ENCODE measurements at regions of chr1 and their contacts with region 1.

Region 1: GRCh38 chr1:18581420-18581880 is 49.2 kb upstream of the PAX7 start:
- DNase-seq: peak in 1 of 2 experiments; percentile 93
- H3K4me3 ChIP-seq: no peak overlapping the region
- H3K27ac ChIP-seq: no peak overlapping the region
- H3K4me1 ChIP-seq: no peaks in the 10 kb centered on the region; a peak in 1 of 7 replicates
- H3K27me3 ChIP-seq: peaks cover 0 to 2% (median 0%) of the 10 kb centered on the region in 4 experiments; a peak in 3 of 7 replicates
- CTCF ChIP-seq: peak; percentile 94 to 100 (median 96)
- EP300 ChIP-seq: no peak
- POLR2A ChIP-seq: no peak
- RAD21 ChIP-seq: peak; percentile 98 to 99

Region 2: DNA sequence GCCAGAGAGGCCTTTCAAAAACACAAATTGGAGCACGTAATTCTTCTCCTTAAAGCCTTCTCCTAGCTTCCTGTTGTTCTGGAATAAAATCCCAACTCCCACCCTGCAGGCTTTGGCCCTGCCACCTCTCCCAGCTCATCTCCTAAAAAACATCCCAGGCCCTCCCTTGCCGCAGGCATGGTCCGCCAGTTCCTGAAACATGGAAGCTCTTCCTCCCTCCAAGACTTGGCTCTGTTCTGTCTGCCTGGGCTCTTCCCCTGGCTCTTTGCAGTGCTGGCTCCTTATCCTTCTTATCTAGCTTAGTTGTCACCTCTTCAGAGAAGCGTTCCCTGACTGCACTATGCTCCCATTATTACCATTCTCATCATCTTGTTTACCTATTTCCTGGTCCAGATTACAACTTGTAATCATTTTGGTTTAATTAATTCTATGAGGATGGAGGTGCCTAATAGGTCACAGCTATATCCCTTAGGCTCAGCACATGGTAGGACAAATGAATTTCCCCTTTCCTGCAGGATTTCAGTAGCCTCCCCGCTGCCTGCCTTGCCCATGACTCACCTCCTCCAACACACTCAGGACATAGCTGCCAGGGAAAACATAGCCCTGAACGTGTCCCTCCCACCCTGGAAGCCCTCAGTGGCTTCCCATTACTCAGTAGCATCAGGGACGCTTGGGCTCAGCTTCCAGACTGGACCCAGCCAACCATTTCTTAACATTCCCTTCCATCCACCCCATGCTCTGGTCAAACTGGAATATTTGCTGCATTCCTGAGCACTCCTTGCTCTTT is 489.6 kb before region 1 on chr1:
- CTCF ChIA-PET with region 1: interaction called, 13 read pairs
- POLR2A ChIA-PET with region 1: no interaction called
- DNase-seq: no peak
- H3K4me3 ChIP-seq: peak overlapping the region in 1 of 4 experiments; percentile 5; a peak in 2 of 8 replicates
- H3K27ac ChIP-seq: no peak overlapping the region
- H3K4me1 ChIP-seq: peaks cover 6 to 23% (median 15%) of the 10 kb centered on the region in 4 experiments
- H3K27me3 ChIP-seq: peaks cover 0 to 5% (median 0%) of the 10 kb centered on the region in 4 experiments; a peak in 1 of 7 replicates
- CTCF ChIP-seq: no peak
- EP300 ChIP-seq: no peak
- POLR2A ChIP-seq: no peak
- RAD21 ChIP-seq: no peak

Region 3: DNA sequence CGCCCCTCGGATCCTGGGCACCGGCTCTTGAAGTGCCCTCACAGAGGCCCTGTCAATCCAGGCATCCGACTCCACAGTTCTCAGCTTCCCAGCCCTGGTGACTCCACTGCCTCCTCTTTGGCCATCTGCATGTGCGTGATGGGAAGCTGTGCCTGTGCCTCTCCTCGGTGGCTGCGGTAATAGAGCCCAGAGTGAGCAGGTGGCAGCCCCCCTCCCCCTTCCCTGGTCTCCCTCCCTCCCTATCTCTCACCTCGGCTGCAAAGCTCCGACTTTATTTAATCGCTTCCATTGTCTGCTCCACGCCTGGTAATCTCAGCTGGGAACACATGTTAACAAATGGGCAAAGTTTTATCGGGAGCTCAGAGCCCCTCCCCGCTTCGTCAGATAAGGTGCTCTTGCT is 382.0 kb before region 1 on chr1:
- CTCF ChIA-PET with region 1: interaction called, 14 read pairs
- POLR2A ChIA-PET with region 1: no interaction called
- DNase-seq: peak in 1 of 2 experiments; percentile 55
- H3K4me3 ChIP-seq: no peak overlapping the region
- H3K27ac ChIP-seq: no peak overlapping the region
- H3K4me1 ChIP-seq: peaks cover 4 to 13% (median 8%) of the 10 kb centered on the region in 4 experiments
- H3K27me3 ChIP-seq: no peaks in the 10 kb centered on the region
- CTCF ChIP-seq: no peak
- EP300 ChIP-seq: no peak
- POLR2A ChIP-seq: no peak
- RAD21 ChIP-seq: peak in 1 of 2 experiments; percentile 5; a peak in 1 of 4 replicates

Region 4: DNA sequence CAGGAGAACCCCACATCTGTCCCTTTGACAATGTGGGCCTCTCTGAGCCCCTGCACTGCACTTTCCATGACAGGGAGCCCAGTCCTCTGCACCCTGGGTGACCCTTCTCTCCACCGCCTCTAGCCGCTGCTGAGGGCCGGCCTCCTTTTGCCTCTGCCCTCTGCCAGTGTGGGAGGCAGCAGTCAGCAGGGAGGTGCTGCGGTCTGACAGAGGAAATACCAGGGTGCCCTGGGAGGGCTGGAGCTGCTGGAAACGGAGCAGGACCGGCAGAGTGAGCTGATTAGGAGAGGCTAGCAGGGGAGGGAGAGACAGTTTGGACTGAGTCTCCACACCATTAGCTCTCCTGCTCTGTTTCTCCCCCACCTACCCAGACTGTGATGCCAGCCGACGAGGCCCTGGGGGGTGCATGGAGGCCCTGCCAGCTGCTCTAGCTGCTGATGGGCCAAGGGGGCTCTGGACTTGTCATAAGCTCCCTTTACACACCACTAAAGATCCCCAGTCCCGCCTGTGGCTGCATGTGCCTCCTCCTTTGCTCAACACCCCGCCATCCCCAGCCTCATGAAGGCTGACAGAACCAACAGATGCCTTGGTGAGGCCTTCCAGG is 271.8 kb before region 1 on chr1:
- CTCF ChIA-PET with region 1: interaction called, 13 read pairs
- POLR2A ChIA-PET with region 1: no interaction called
- DNase-seq: no peak
- H3K4me3 ChIP-seq: no peak overlapping the region
- H3K27ac ChIP-seq: no peak overlapping the region
- H3K4me1 ChIP-seq: no peaks in the 10 kb centered on the region; a peak in 1 of 7 replicates
- H3K27me3 ChIP-seq: no peaks in the 10 kb centered on the region
- CTCF ChIP-seq: no peak
- EP300 ChIP-seq: no peak
- POLR2A ChIP-seq: no peak
- RAD21 ChIP-seq: no peak

Region 5: GRCh38 chr1:18373882-18374493 is 207.5 kb before region 1 on chr1:
- CTCF ChIA-PET with region 1: interaction called, 16 read pairs
- POLR2A ChIA-PET with region 1: no interaction called
- DNase-seq: peak; percentile 44 to 96
- H3K4me3 ChIP-seq: no peak overlapping the region
- H3K27ac ChIP-seq: no peak overlapping the region
- H3K4me1 ChIP-seq: peaks cover 0 to 6% (median 0%) of the 10 kb centered on the region in 4 experiments; a peak in 2 of 7 replicates
- H3K27me3 ChIP-seq: peaks cover 0 to 3% (median 0%) of the 10 kb centered on the region in 4 experiments; a peak in 2 of 7 replicates
- CTCF ChIP-seq: peak; percentile 95 to 96 (median 96)
- EP300 ChIP-seq: no peak
- POLR2A ChIP-seq: no peak
- RAD21 ChIP-seq: peak; percentile 68 to 83

Region 6: GRCh38 chr1:18569811-18570545 is 11.5 kb before region 1 on chr1:
- CTCF ChIA-PET with region 1: interaction called, 984 read pairs
- POLR2A ChIA-PET with region 1: no interaction called
- DNase-seq: no peak
- H3K4me3 ChIP-seq: no peak overlapping the region
- H3K27ac ChIP-seq: no peak overlapping the region
- H3K4me1 ChIP-seq: no peaks in the 10 kb centered on the region; a peak in 2 of 7 replicates
- H3K27me3 ChIP-seq: no peaks in the 10 kb centered on the region; a peak in 1 of 7 replicates
- CTCF ChIP-seq: peak in 1 of 3 experiments; percentile 24; a peak in 2 of 4 replicates
- EP300 ChIP-seq: no peak
- POLR2A ChIP-seq: no peak
- RAD21 ChIP-seq: peak; percentile 13 to 31; a peak in 1 of 4 replicates

Region 7: GRCh38 chr1:18592367-18592766 is 10.9 kb after region 1 on chr1:
- CTCF ChIA-PET with region 1: interaction called, 33 read pairs
- POLR2A ChIA-PET with region 1: no interaction called
- DNase-seq: no peak
- H3K4me3 ChIP-seq: no peak overlapping the region
- H3K27ac ChIP-seq: no peak overlapping the region
- H3K4me1 ChIP-seq: peaks cover 0 to 2% (median 0%) of the 10 kb centered on the region in 4 experiments; a peak in 1 of 7 replicates
- H3K27me3 ChIP-seq: peaks cover 0 to 10% (median 4%) of the 10 kb centered on the region in 4 experiments; a peak in 5 of 7 replicates
- CTCF ChIP-seq: no peak
- EP300 ChIP-seq: no peak
- POLR2A ChIP-seq: no peak
- RAD21 ChIP-seq: no peak